Activated CD4-positive, alpha-beta T cell treated with anti-CD3 and anti-CD28 coated beads for 36 hours (primary cell): ENCODE measurements at regions of chr20 and their contacts with region 1.

Region 1: DNA sequence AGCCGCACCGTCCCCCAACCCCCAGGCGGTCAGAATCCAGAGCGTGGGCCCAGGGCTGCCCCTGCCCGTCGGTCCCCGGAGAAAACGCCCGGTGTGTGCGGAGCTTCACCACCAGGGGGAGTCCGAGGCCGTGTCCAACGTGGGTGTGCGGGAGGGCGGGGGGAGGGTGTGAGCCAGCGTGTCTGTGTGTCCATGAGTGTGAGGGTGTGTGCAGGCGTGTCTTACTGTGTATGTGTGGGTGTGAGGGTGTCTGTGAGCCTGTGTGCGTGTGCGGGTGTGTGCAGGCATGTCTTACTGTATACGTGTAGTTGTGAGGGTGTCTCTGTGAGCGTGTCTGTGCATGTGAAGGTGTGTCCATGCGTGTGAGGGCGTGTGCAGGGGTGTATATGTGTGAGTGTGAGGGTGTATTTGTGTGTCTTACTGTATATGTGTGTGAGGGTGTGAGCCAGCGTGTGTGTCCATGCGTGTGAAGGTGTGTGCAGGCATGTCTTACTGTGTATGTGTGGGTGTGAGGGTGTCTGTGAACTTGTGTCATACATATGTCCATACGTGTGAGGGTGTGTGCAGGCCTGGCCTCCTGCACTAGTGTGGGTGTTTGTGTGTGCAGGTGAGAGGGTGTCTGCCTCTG is 24.6 kb upstream of the GATA5 start:
- DNase-seq: peak; percentile 91
- ATAC-seq: peak; percentile 14
- H3K4me3 Mint-ChIP-seq: no peak overlapping the region
- H3K27ac Mint-ChIP-seq: peak overlapping the region; percentile 82
- H3K4me1 Mint-ChIP-seq: peaks cover 32% of the 10 kb centered on the region
- H3K27me3 Mint-ChIP-seq: peaks cover 1% of the 10 kb centered on the region

Region 2: GRCh38 chr20:62143118-62143973 is 357.0 kb before region 1 on chr20 and contains the starts of genes PSMA7 and SS18L1:
- CTCF ChIA-PET with region 1: no interaction called
- POLR2A ChIA-PET with region 1: no interaction called
- intact Hi-C with region 1: loop called in 1 of 2 experiments (anchors 5 kb)
- DNase-seq: peak; percentile 92
- ATAC-seq: peak; percentile 87
- H3K4me3 Mint-ChIP-seq: peak within 1 kb of the TSS; percentile 89
- H3K27ac Mint-ChIP-seq: peak within 1 kb of the TSS; percentile 91
- H3K4me1 Mint-ChIP-seq: peaks cover 61% of the 10 kb centered on the region
- H3K27me3 Mint-ChIP-seq: no peaks in the 10 kb centered on the region
- total RNA-seq, gene PSMA7: 208 to 296 TPM
- total RNA-seq, gene SS18L1: 14.3 to 16.6 TPM

Region 3: GRCh38 chr20:62407221-62407992 is 92.9 kb before region 1 on chr20 and contains the start of gene CABLES2:
- CTCF ChIA-PET with region 1: no interaction called
- POLR2A ChIA-PET with region 1: no interaction called
- intact Hi-C with region 1: loop called in 1 of 2 experiments (anchors 1 kb)
- DNase-seq: peak; percentile 96
- ATAC-seq: peak; percentile 93
- H3K4me3 Mint-ChIP-seq: peak within 1 kb of the TSS; percentile 72
- H3K27ac Mint-ChIP-seq: peak within 1 kb of the TSS; percentile 82
- H3K4me1 Mint-ChIP-seq: peaks cover 23% of the 10 kb centered on the region
- H3K27me3 Mint-ChIP-seq: peaks cover 2% of the 10 kb centered on the region
- total RNA-seq, gene CABLES2: 6.4 to 7.6 TPM

Region 4: DNA sequence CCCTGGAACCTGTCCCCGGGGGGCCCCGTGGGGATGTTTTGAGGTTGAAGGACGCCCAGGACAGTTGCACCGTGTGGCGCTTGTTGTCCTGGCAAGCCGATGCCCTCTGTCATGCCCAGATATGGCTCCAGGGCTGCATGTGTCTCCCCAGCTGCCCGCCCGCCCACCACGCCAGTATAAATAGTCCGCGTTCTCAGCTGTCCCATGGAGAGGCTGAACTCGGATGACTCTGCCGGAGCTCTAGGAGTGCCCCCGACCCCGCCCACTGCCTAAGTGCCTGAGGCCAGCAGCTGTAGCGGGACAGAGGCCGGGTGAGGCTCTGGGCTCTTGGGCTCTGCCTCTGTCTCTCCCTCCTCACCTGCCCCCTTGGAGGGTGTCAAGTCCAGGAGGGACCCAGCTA is 58.4 kb after region 1 on chr20:
- CTCF ChIA-PET with region 1: no interaction called
- POLR2A ChIA-PET with region 1: no interaction called
- intact Hi-C with region 1: no loop called
- DNase-seq: no peak
- ATAC-seq: no peak
- H3K4me3 Mint-ChIP-seq: no peak overlapping the region
- H3K27ac Mint-ChIP-seq: no peak overlapping the region
- H3K4me1 Mint-ChIP-seq: no peaks in the 10 kb centered on the region
- H3K27me3 Mint-ChIP-seq: peaks cover 13% of the 10 kb centered on the region

Region 5: DNA sequence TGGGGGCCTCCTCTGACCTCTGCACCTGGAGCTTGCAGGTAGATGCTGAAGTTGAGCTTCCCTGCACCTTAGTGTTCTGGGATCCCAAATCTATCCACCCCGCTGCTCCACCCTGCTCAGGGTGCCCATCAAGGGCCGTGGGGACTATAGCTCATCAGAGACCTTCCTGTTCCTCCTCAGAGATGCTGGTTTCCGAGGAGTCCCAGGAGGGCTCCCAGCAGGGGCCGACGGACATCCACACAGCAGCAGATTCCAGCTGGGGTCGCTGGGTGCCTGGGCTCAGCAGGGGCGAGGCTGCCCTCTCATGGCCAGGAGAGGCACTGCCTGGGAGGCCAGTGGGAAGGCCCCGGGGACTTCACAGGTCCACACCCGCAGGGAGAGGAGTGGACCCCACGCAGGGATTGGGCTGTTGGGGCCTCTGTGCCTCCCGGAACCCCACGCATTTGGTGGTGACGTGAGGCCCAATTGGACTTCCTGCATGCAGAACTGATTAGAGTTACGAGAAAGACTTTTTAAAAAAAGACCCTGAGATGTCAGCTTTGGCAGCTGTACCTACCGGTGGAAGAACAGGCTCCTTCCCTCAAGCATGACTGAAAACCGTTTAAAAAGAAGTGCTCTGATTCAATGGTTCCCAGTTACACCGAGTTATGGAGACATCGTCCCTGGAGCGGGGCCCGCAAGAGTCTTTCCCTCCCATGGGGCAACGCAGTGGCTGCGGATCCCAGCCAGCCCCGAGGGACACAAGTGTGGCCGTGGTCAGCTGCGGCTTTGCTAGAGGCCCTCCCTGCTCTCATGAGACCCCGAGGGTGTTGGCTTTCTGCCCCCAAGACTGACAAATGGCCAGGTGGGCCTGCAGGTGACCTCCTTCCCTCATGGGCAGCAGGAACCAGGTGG is 116.6 kb after region 1 on chr20:
- CTCF ChIA-PET with region 1: interaction called, 19 read pairs
- POLR2A ChIA-PET with region 1: interaction called, 3 read pairs
- intact Hi-C with region 1: loop called (anchors 1 kb)
- DNase-seq: peak; percentile 88
- ATAC-seq: peak; percentile 75
- H3K4me3 Mint-ChIP-seq: peak overlapping the region; percentile 57
- H3K27ac Mint-ChIP-seq: peak overlapping the region; percentile 91
- H3K4me1 Mint-ChIP-seq: peaks cover 29% of the 10 kb centered on the region
- H3K27me3 Mint-ChIP-seq: no peaks in the 10 kb centered on the region

Region 6: DNA sequence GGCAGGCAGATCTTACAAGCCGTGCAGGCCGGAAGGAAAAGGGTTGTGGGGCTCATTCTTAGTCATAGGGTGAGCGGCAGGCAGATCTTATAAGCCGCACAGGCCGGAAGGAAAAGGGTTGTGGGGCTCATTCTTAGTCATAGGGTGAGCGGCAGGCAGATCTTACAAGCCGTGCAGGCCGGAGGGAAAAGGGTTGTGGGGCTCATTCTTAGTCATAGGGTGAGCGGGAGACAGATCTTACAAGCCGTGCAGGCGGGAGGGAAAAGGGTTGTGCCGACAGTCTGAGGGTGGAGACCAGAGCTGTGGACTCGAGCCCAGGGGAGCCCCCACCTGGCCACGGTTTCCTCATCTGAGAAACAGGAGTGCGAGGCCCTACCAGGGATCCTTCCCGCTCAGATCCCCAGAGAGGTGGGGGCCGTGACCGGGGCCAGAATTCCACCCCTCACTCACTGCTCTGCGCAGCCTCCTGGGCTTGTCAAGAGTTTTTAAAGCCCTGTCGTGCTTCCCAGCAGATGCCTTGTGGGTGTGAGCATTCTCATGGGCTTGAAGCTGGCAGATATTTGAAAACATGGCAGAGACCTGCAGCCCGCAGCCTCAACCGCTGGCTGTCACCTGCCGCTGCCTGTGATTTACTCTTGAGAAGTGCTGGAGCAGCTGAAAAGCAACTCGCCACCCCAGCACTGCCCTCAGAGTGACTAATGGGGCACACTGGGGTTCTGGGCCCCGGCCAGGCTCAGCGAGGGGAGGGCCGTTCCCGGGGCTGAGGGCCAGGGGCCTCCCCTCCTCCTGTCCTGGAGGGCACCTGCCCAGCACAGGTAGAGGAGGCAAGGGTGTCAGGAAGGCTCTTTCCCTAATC is 240.2 kb after region 1 on chr20:
- CTCF ChIA-PET with region 1: no interaction called
- POLR2A ChIA-PET with region 1: no interaction called
- intact Hi-C with region 1: loop called in 1 of 2 experiments (anchors 1 kb)
- DNase-seq: peak; percentile 90
- ATAC-seq: peak; percentile 86
- H3K4me3 Mint-ChIP-seq: peak overlapping the region; percentile 58
- H3K27ac Mint-ChIP-seq: peak overlapping the region; percentile 89
- H3K4me1 Mint-ChIP-seq: peaks cover 52% of the 10 kb centered on the region
- H3K27me3 Mint-ChIP-seq: peaks cover 3% of the 10 kb centered on the region

Region 7: GRCh38 chr20:62891111-62891510 is 390.8 kb after region 1 on chr20:
- CTCF ChIA-PET with region 1: no interaction called
- POLR2A ChIA-PET with region 1: no interaction called
- intact Hi-C with region 1: no loop called
- DNase-seq: peak; percentile 56
- ATAC-seq: peak; percentile 62
- H3K4me3 Mint-ChIP-seq: no peak overlapping the region
- H3K27ac Mint-ChIP-seq: peak overlapping the region; percentile 69
- H3K4me1 Mint-ChIP-seq: peaks cover 37% of the 10 kb centered on the region
- H3K27me3 Mint-ChIP-seq: no peaks in the 10 kb centered on the region

Region 8: DNA sequence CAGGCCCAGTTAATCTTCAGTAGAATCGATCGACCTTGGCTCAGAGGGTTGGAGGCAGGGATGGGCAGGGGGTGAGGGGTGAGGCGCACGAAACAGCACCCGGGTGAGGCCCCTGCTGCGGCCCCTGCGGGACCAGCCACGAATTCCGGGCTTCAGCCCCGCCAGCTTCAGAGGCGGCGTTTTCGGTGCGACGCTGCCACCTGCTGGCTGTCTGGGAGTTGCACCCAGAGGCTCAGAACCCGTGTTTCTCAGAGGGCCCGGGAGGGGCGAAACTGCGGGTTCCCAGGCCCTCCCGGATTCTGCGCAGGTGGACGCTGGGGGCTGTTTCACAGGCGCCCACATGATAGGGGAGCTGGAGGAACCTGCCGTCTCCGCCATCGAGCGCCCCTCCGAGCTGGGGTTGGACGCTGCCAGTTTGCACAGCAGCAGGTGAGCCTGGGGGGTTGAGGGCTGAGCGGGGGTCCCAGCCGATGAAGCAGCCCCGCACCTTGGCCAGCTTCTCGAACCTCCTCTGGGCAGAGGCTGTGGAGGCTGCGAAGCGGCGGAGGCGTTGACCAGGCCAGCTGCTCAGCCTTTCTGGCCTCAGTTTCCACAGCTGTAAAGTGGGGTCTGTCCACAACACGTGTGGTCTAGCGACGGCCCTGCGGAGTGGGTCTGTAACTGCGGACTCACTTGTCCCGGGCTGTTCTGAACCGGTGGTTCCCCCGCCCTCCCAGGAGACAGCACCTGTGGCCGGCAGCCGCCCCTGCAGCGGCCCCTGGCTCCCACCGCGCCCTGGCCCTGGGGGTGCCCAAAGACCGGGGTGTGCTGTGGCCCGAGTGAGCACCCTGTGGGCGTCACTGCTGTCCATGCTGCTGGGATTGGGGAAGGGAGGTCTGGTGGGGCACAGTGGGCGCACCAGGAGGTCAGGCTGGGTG is 509.0 kb after region 1 on chr20:
- CTCF ChIA-PET with region 1: no interaction called
- POLR2A ChIA-PET with region 1: no interaction called
- intact Hi-C with region 1: loop called in 1 of 2 experiments (anchors 2 kb)
- DNase-seq: peak; percentile 90
- ATAC-seq: peak; percentile 82
- H3K4me3 Mint-ChIP-seq: no peak overlapping the region
- H3K27ac Mint-ChIP-seq: no peak overlapping the region
- H3K4me1 Mint-ChIP-seq: peaks cover 21% of the 10 kb centered on the region
- H3K27me3 Mint-ChIP-seq: peaks cover 42% of the 10 kb centered on the region